ENCODE measurements at regions of chr1 and their contacts with region 1.

Region 1: GRCh38 chr1:235971571-235972310 is 93.1 kb downstream of the NID1 start:
- DNase-seq: peak; percentile 93
- ATAC-seq: peak; percentile 98
- H3K4me3 Mint-ChIP-seq: peak overlapping the region; percentile 60
- H3K27ac Mint-ChIP-seq: peak overlapping the region; percentile 82
- H3K4me1 Mint-ChIP-seq: peaks cover 15% of the 10 kb centered on the region
- H3K27me3 Mint-ChIP-seq: peaks cover 2% of the 10 kb centered on the region

Region 2: DNA sequence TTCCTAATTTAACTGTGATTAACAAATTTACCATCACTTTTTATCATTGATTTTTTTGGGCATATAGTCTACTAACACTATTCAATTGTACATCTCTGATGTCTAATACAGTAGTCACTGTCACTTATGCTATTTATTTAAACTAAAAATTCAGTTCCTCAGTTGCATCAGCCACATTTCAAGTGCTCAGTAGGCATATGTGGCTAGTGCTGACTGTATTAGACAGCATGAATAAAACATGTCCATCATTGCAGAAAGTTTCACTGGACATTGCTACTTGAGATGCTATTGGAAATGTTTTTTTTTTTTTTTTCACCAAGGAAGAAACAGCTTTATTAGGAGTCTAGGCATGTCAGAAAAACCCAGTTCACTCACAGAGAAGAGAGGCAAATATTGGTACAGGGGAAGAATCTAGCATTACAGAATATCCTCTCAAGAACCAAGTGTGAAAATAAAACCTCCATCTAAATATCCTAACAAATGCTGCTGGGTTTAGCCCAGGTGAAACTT is 214.1 kb before region 1 on chr1:
- CTCF ChIA-PET with region 1: interaction called, 14 read pairs
- POLR2A ChIA-PET with region 1: no interaction called
- intact Hi-C with region 1: no loop called
- DNase-seq: no peak
- ATAC-seq: no peak
- H3K4me3 Mint-ChIP-seq: no peak overlapping the region
- H3K27ac Mint-ChIP-seq: no peak overlapping the region
- H3K4me1 Mint-ChIP-seq: no peaks in the 10 kb centered on the region
- H3K27me3 Mint-ChIP-seq: no peaks in the 10 kb centered on the region

Region 3: GRCh38 chr1:235831148-235831547 is 140.6 kb before region 1 on chr1:
- CTCF ChIA-PET with region 1: interaction called, 11 read pairs
- POLR2A ChIA-PET with region 1: interaction called, 3 read pairs
- intact Hi-C with region 1: no loop called
- DNase-seq: peak; percentile 77
- ATAC-seq: peak; percentile 100
- H3K4me3 Mint-ChIP-seq: no peak overlapping the region
- H3K27ac Mint-ChIP-seq: no peak overlapping the region
- H3K4me1 Mint-ChIP-seq: peaks cover 9% of the 10 kb centered on the region
- H3K27me3 Mint-ChIP-seq: no peaks in the 10 kb centered on the region

Region 4: GRCh38 chr1:235866913-235867845 is 104.6 kb before region 1 on chr1:
- CTCF ChIA-PET with region 1: interaction called, 24 read pairs
- POLR2A ChIA-PET with region 1: interaction called, 4 read pairs
- intact Hi-C with region 1: loop called (anchors 1 kb)
- DNase-seq: peak; percentile 99
- ATAC-seq: peak; percentile 76
- H3K4me3 Mint-ChIP-seq: peak overlapping the region; percentile 96
- H3K27ac Mint-ChIP-seq: peak overlapping the region; percentile 97
- H3K4me1 Mint-ChIP-seq: peaks cover 45% of the 10 kb centered on the region
- H3K27me3 Mint-ChIP-seq: no peaks in the 10 kb centered on the region

Region 5: GRCh38 chr1:235947989-235948388 is 23.8 kb before region 1 on chr1:
- CTCF ChIA-PET with region 1: interaction called, 11 read pairs
- POLR2A ChIA-PET with region 1: interaction called, 3 read pairs
- intact Hi-C with region 1: no loop called
- DNase-seq: no peak
- ATAC-seq: no peak
- H3K4me3 Mint-ChIP-seq: no peak overlapping the region
- H3K27ac Mint-ChIP-seq: no peak overlapping the region
- H3K4me1 Mint-ChIP-seq: peaks cover 17% of the 10 kb centered on the region
- H3K27me3 Mint-ChIP-seq: no peaks in the 10 kb centered on the region

Region 6: DNA sequence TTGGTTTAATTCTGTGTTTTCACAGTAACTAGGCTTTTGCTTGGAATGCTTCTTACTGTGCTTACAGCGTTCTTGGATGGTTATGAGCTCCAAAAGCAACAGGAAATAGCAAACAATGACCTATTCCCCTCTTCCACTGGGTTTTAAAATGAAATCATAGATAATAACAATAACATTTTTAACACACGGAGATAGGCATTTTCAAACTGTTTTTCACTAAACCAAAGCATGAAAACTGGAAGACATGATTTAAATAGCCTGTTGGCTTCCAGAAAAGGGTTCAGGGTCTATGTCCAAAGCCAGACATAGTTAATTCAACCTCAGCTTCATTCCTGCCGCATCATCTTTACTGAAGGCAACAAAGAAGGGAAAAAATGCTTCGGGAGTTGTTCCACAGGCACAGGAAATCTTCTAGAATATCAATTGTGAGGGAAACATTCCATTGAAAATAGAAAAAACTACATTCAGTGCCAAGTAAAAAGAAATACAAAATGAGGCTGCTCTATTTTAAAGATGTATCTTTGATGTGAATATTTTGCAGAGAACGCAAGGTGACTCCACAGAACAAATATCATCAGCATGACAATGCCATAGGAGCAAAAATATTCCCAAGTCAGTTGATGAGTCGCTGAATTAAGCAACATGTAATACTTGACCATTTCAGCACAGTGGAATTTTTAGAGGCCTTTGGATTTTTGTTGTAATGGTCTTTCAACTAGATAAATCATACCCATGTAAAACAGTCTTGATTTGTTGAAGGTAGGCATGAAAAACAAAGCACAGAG is 12.5 kb after region 1 on chr1:
- CTCF ChIA-PET with region 1: interaction called, 15 read pairs
- POLR2A ChIA-PET with region 1: no interaction called
- intact Hi-C with region 1: no loop called
- DNase-seq: no peak
- ATAC-seq: no peak
- H3K4me3 Mint-ChIP-seq: no peak overlapping the region
- H3K27ac Mint-ChIP-seq: no peak overlapping the region
- H3K4me1 Mint-ChIP-seq: no peaks in the 10 kb centered on the region
- H3K27me3 Mint-ChIP-seq: peaks cover 3% of the 10 kb centered on the region

Region 7: GRCh38 chr1:236338096-236338495 is 366.4 kb after region 1 on chr1:
- CTCF ChIA-PET with region 1: no interaction called
- POLR2A ChIA-PET with region 1: no interaction called
- intact Hi-C with region 1: no loop called
- DNase-seq: no peak
- ATAC-seq: no peak
- H3K4me3 Mint-ChIP-seq: no peak overlapping the region
- H3K27ac Mint-ChIP-seq: no peak overlapping the region
- H3K4me1 Mint-ChIP-seq: no peaks in the 10 kb centered on the region
- H3K27me3 Mint-ChIP-seq: no peaks in the 10 kb centered on the region